ENCODE measurements at regions of chr9 and their contacts with region 1.

Region 1: DNA sequence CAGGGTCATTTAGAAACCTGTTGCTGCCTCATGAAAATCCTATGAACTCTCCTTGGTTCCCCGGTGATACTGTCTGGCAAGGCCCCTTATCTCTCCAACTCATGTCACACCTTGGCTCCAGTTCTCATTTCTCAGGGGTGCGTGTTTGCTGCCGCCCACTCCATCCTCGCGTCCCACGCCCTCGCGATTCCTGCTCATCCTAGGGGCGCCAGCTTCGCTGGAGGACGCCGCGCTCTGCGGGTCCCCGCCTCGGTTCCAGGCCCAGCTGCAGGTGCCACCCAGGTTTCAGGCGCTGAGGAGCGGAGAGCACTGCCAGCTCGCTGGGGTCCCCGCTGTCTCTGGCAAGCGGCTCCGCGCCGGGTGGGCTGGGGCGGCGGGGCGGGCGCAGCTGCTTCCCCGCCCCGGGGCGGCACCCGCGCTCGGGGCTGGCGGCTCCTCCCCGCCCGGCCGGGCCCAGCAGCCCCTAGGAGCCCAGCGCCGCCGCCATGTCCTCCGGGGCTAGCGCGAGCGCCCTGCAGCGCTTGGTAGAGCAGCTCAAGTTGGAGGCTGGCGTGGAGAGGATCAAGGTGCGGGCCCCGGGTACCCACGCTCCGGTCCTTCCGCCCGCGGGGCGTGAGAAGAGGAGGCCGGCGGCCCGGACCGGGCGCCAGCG is at the start of gene GNG10:
- DNase-seq: peak; percentile 97
- H3K4me3 ChIP-seq: peak within 1 kb of the TSS; percentile 80 to 89
- H3K27ac ChIP-seq: peak within 1 kb of the TSS; percentile 23 to 68; a peak in 2 of 4 replicates
- H3K4me1 ChIP-seq: peaks cover 0 to 12% of the 10 kb centered on the region in 2 experiments; a peak in 2 of 4 replicates
- H3K27me3 ChIP-seq: no peaks in the 10 kb centered on the region
- CTCF ChIP-seq: no peak
- EP300 ChIP-seq: no peak
- RAD21 ChIP-seq: no peak
- polyA plus RNA-seq, gene GNG10: 57.7 and 69.3 TPM in 2 replicates

Region 2: DNA sequence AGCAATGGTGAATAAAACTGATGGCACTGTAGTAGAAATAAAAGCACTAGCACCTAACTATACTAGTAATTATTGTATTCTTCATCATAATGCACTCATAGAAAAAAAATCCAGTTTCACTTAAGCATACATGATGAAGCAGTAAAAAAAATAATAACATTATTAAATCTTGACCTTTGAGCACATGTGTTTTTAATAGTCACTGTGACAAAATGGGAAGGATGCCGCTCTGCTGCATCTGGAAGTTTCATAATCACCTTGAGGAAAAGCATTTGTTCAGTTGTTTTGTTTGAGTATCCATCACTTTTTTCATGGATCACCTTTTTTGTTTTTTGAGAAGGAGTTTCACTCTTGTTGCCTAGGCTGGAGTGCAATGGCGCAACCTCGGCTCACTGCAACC is 344.5 kb before region 1 on chr9:
- CTCF ChIA-PET with region 1: no interaction called
- POLR2A ChIA-PET with region 1: no interaction called
- DNase-seq: no peak
- H3K4me3 ChIP-seq: no peak overlapping the region
- H3K27ac ChIP-seq: no peak overlapping the region
- H3K4me1 ChIP-seq: no peaks in the 10 kb centered on the region
- H3K27me3 ChIP-seq: no peaks in the 10 kb centered on the region
- CTCF ChIP-seq: no peak
- EP300 ChIP-seq: no peak
- RAD21 ChIP-seq: no peak

Region 3: GRCh38 chr9:111631071-111631971 is 30.0 kb before region 1 on chr9 and contains the start of gene DNAJC25:
- CTCF ChIA-PET with region 1: no interaction called
- POLR2A ChIA-PET with region 1: interaction called, 10 read pairs
- DNase-seq: peak; percentile 99
- H3K4me3 ChIP-seq: peak within 1 kb of the TSS; percentile 90 to 97
- H3K27ac ChIP-seq: peak within 1 kb of the TSS; percentile 60 to 79; a peak in 3 of 4 replicates
- H3K4me1 ChIP-seq: peaks cover 10 to 21% of the 10 kb centered on the region in 2 experiments; a peak in 3 of 4 replicates
- H3K27me3 ChIP-seq: no peaks in the 10 kb centered on the region
- CTCF ChIP-seq: no peak
- EP300 ChIP-seq: 0 out of 4 replicates have a peak, but pooled peaks of 1 of the 2 experiments have one; percentile 21
- RAD21 ChIP-seq: no peak; the same call in 1 of the 2 replicates
- polyA plus RNA-seq, gene DNAJC25: 3.3 and 4.4 TPM in 2 replicates

Measured in SK-N-SH (cell line).